ENCODE measurements at regions of chr6 and their contacts with region 1.

Region 1: DNA sequence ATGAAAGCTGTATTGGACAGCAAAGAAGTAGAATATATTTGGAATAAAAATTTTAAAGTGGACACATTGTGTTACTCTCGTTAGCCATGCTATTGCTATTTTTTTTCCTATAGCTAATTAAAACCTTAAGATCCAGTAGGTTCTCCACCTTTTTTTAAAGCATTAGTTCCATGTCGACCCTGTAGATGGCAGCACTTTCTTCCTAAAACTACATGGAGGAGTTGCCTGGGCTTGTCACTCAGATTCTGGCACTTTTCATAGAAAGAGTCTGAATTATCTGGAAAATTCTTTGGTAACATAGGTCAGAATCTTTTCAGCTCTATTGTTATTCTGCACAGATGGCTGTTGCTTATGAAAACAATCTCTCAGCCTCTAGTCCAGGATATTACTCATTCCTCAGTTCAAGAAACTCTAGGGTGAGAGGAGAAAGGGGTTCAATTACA is 42.0 kb upstream of the ESR1 start:
- DNase-seq: no peak
- ATAC-seq: peak; percentile 80
- H3K4me3 ChIP-seq: no peak overlapping the region
- H3K27ac ChIP-seq: no peak overlapping the region
- H3K4me1 ChIP-seq: no peaks in the 10 kb centered on the region
- H3K27me3 ChIP-seq: peaks cover 0 to 5% of the 10 kb centered on the region in 2 experiments; a peak in 1 of 4 replicates
- CTCF ChIP-seq: peak; percentile 60 to 76 (median 64)
- EP300 ChIP-seq: no peak
- POLR2A ChIP-seq: no peak
- RAD21 ChIP-seq: peak; percentile 71

Region 2: DNA sequence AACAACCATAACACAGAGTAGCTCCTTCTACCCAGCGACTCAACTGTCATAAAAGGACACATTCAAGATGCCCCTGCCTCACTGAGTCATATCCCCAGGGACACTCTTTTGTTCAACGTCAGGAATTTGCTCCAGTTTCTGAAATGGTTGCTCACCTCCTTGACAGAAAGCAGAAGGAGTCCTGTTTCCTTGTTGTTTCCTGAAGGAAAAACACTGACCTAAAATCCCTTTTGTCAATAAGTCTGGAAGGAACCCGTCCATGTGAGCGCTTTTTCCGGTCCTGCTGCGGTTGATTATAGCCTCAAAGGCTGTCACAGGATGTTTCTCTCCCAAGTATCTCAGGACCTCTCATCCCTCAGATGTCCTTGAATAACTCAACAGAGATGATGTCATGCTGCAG is 1279.4 kb before region 1 on chr6:
- CTCF ChIA-PET with region 1: no interaction called
- POLR2A ChIA-PET with region 1: no interaction called
- RAD21 ChIA-PET with region 1: no interaction called
- SMC1A ChIA-PET with region 1: no interaction called
- in situ Hi-C with region 1: no loop called
- intact Hi-C with region 1: no loop called
- DNase-seq: no peak
- ATAC-seq: no peak
- H3K4me3 ChIP-seq: no peak overlapping the region
- H3K27ac ChIP-seq: no peak overlapping the region
- H3K4me1 ChIP-seq: peaks cover 2% of the 10 kb centered on the region; the same call in 1 of the 2 replicates
- H3K27me3 ChIP-seq: no peaks in the 10 kb centered on the region
- CTCF ChIP-seq: no peak
- EP300 ChIP-seq: no peak
- POLR2A ChIP-seq: no peak
- RAD21 ChIP-seq: no peak

Region 3: DNA sequence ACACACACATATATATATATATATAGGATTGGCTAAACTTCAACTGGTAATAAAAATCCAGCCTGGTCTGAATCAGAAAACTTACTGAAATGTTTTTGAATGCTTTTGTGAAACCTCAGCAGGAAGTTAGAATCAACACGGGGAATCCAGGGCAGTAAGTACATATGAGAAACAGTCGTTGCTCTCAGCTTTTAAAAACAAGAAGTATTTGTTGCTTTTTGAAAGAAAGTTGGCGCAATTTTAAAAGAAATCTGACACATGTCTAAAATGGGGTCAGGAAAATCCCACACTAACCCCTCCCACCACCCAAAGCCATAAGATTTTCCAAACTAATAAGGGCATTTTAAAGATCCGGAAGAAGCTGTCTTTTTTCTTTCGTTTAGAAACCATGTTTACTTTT is 283.2 kb before region 1 on chr6:
- CTCF ChIA-PET with region 1: no interaction called
- POLR2A ChIA-PET with region 1: no interaction called
- RAD21 ChIA-PET with region 1: no interaction called
- SMC1A ChIA-PET with region 1: no interaction called
- in situ Hi-C with region 1: no loop called
- intact Hi-C with region 1: no loop called
- DNase-seq: no peak
- ATAC-seq: peak; percentile 54
- H3K4me3 ChIP-seq: peak overlapping the region; percentile 10; the same call in 1 of the 2 replicates
- H3K27ac ChIP-seq: peak overlapping the region; percentile 5
- H3K4me1 ChIP-seq: no peaks in the 10 kb centered on the region; the same call in 1 of the 2 replicates
- H3K27me3 ChIP-seq: no peaks in the 10 kb centered on the region
- CTCF ChIP-seq: no peak
- EP300 ChIP-seq: no peak
- POLR2A ChIP-seq: no peak
- RAD21 ChIP-seq: no peak

Region 4: GRCh38 chr6:151702851-151703611 is 62.4 kb before region 1 on chr6:
- CTCF ChIA-PET with region 1: interaction called, 11 read pairs
- POLR2A ChIA-PET with region 1: interaction called, 3 read pairs
- RAD21 ChIA-PET with region 1: interaction called, 5 read pairs
- SMC1A ChIA-PET with region 1: interaction called, 51 read pairs
- in situ Hi-C with region 1: no loop called
- intact Hi-C with region 1: no loop called
- DNase-seq: no peak
- ATAC-seq: peak; percentile 85
- H3K4me3 ChIP-seq: no peak overlapping the region
- H3K27ac ChIP-seq: no peak overlapping the region
- H3K4me1 ChIP-seq: peaks cover 8% of the 10 kb centered on the region
- H3K27me3 ChIP-seq: no peaks in the 10 kb centered on the region; a peak in 1 of 4 replicates
- CTCF ChIP-seq: no peak
- EP300 ChIP-seq: no peak
- POLR2A ChIP-seq: no peak
- RAD21 ChIP-seq: no peak

Region 5: DNA sequence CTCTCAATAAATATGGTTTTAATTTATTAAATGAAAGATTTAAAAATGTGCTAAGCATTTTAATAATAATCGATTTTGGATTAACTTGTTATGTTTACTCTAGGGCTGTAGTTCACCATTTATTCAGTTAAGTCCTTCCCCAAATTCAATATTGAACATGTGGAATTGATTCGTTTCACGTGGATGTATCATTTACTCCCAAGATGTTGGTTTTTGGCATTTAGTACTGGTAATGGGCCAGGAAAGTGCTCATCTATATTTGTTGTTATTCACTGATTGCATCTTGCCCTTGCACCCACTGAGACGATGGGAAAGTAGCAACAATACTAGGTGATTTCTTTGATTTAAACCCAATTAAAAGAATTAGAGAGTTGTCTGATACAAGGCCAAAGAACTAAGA is 139.2 kb after region 1 on chr6:
- CTCF ChIA-PET with region 1: interaction called, 4 read pairs
- POLR2A ChIA-PET with region 1: no interaction called
- RAD21 ChIA-PET with region 1: no interaction called
- SMC1A ChIA-PET with region 1: interaction called, 3 read pairs
- in situ Hi-C with region 1: no loop called
- intact Hi-C with region 1: loop called (anchors 5 kb)
- DNase-seq: no peak
- ATAC-seq: no peak
- H3K4me3 ChIP-seq: no peak overlapping the region
- H3K27ac ChIP-seq: no peak overlapping the region
- H3K4me1 ChIP-seq: no peaks in the 10 kb centered on the region
- H3K27me3 ChIP-seq: no peaks in the 10 kb centered on the region
- CTCF ChIP-seq: no peak
- EP300 ChIP-seq: no peak
- POLR2A ChIP-seq: no peak
- RAD21 ChIP-seq: no peak

Region 6: GRCh38 chr6:152124429-152125074 is 359.1 kb after region 1 on chr6:
- CTCF ChIA-PET with region 1: interaction called, 100 read pairs
- POLR2A ChIA-PET with region 1: no interaction called
- RAD21 ChIA-PET with region 1: interaction called, 62 read pairs
- SMC1A ChIA-PET with region 1: interaction called, 67 read pairs
- in situ Hi-C with region 1: loop called (anchors 10 kb)
- intact Hi-C with region 1: loop called (anchors 1 kb)
- DNase-seq: no peak
- ATAC-seq: peak; percentile 82
- H3K4me3 ChIP-seq: no peak overlapping the region
- H3K27ac ChIP-seq: no peak overlapping the region
- H3K4me1 ChIP-seq: no peaks in the 10 kb centered on the region
- H3K27me3 ChIP-seq: no peaks in the 10 kb centered on the region
- CTCF ChIP-seq: peak; percentile 57 to 63 (median 58); a peak in 5 of 6 replicates
- EP300 ChIP-seq: no peak
- POLR2A ChIP-seq: no peak
- RAD21 ChIP-seq: peak; percentile 72

Region 7: DNA sequence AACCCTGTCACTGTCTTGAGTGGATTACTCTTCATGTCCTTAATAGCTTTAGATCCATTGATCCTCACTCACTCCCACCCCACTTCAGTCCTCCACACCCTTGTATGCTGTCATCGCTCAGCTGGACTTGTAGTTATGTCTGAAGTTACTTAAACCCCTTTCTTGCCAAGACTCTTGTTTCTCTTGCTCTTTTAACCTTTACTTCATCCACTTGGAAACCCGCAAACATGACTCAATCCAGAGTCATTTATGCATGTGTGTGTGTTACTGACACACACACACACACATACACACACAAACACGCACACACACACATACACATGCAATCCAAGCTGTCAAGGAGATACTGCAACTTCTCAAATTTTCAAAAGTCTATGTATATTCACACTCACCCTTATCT is 529.9 kb after region 1 on chr6:
- CTCF ChIA-PET with region 1: interaction called, 10 read pairs
- POLR2A ChIA-PET with region 1: no interaction called
- RAD21 ChIA-PET with region 1: no interaction called
- SMC1A ChIA-PET with region 1: interaction called, 5 read pairs
- in situ Hi-C with region 1: no loop called
- intact Hi-C with region 1: no loop called
- DNase-seq: no peak
- ATAC-seq: no peak
- H3K4me3 ChIP-seq: no peak overlapping the region
- H3K27ac ChIP-seq: no peak overlapping the region
- H3K4me1 ChIP-seq: peaks cover 6% of the 10 kb centered on the region
- H3K27me3 ChIP-seq: no peaks in the 10 kb centered on the region
- CTCF ChIP-seq: no peak
- EP300 ChIP-seq: no peak
- POLR2A ChIP-seq: no peak
- RAD21 ChIP-seq: no peak

Measured in GM12878 (cell line).